SK-N-SH (cell line): ENCODE measurements at regions of chr1 and their contacts with region 1.

Region 1: GRCh38 chr1:52601991-52602855 is at the start of gene GPX7:
- DNase-seq: peak; percentile 89
- H3K4me3 ChIP-seq: peak within 1 kb of the TSS; percentile 9 to 42; a peak in 3 of 4 replicates
- H3K27ac ChIP-seq: peak within 1 kb of the TSS in 1 of 2 experiments; percentile 72; a peak in 2 of 4 replicates
- H3K4me1 ChIP-seq: peaks cover 0 to 23% of the 10 kb centered on the region in 2 experiments; a peak in 2 of 4 replicates
- H3K27me3 ChIP-seq: no peaks in the 10 kb centered on the region
- CTCF ChIP-seq: no peak
- EP300 ChIP-seq: no peak
- RAD21 ChIP-seq: 0 out of 2 replicates have a peak, but pooled peaks have one; percentile 0
- polyA plus RNA-seq, gene GPX7: 5.7 and 6.2 TPM in 2 replicates

Region 2: GRCh38 chr1:52552505-52553361 is 49.5 kb before region 1 on chr1 and contains the start of gene TUT4:
- CTCF ChIA-PET with region 1: interaction called, 3 read pairs
- POLR2A ChIA-PET with region 1: interaction called, 12 read pairs
- DNase-seq: peak; percentile 91
- H3K4me3 ChIP-seq: peak within 1 kb of the TSS; percentile 89 to 95
- H3K27ac ChIP-seq: peak within 1 kb of the TSS; percentile 84 to 95
- H3K4me1 ChIP-seq: peaks cover 0 to 11% of the 10 kb centered on the region in 2 experiments
- H3K27me3 ChIP-seq: no peaks in the 10 kb centered on the region
- CTCF ChIP-seq: peak; percentile 25
- EP300 ChIP-seq: no peak
- RAD21 ChIP-seq: no peak
- polyA plus RNA-seq, gene TUT4: 27.2 and 28.3 TPM in 2 replicates

Region 3: DNA sequence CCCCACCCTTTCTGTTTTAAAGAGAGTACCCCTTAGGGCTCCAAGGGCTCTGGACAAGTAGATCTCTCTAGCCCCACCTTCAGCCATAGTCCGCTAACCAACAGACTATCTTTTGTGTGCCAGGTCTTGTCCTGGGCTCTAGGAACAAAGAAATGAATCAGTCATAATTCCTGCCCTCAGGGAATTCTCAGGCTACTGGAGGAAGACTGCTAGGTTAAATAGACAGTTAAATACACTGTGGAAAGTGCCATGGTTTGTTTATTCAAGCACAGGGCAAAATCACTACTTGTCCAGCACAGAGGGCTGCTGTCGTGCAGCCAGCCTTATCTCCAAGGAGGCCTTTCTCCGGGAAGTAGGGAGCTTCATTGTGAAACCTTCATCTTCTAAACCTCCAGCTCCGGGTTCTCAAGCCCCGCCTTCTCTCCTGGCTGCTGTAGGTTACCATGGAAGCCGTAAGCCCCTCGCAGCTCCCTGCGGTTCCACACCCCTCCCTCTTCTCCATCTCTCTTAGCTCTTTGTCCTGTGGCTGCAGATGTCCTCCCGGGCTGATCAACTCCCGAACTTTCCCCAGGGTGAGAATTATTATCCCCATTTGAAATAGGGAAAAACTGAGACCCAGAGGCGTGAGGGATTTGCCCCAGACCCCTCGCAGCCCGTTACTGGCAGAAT is 60.6 kb after region 1 on chr1:
- CTCF ChIA-PET with region 1: no interaction called
- POLR2A ChIA-PET with region 1: no interaction called
- DNase-seq: peak; percentile 40
- H3K4me3 ChIP-seq: no peak overlapping the region
- H3K27ac ChIP-seq: no peak overlapping the region
- H3K4me1 ChIP-seq: peaks cover 0 to 4% of the 10 kb centered on the region in 2 experiments; a peak in 2 of 4 replicates
- H3K27me3 ChIP-seq: no peaks in the 10 kb centered on the region
- CTCF ChIP-seq: no peak
- EP300 ChIP-seq: no peak
- RAD21 ChIP-seq: no peak

Region 4: DNA sequence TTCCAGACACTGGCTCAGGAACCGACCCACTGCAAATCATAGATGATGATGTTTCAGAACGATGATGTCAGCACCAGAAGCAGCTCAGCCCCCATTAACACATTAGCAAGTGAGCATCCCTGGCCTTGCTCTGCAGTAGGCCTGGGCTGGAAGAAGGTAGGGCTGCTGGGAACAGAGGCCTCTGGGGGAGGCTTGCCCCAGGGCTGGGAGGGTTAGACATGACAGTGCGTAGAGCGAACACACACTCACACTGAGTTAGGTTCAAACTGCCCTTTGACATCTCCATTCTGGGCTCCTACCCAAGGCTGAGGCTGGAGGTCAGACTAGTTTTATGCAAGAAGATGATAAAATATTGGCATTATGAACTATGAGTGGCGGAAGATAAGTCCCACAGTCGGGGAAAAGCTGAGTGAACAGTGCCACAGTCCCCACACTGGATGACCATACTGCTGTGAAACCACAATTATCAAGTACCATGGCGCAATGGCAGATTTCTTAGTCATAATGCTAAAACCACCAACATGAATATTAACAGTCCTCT is 948.0 kb after region 1 on chr1:
- CTCF ChIA-PET with region 1: no interaction called
- POLR2A ChIA-PET with region 1: no interaction called
- DNase-seq: peak; percentile 18
- H3K4me3 ChIP-seq: no peak overlapping the region
- H3K27ac ChIP-seq: no peak overlapping the region; a peak in 1 of 4 replicates
- H3K4me1 ChIP-seq: peaks cover 0 to 36% of the 10 kb centered on the region in 2 experiments; a peak in 1 of 4 replicates
- H3K27me3 ChIP-seq: no peaks in the 10 kb centered on the region
- CTCF ChIP-seq: no peak
- EP300 ChIP-seq: no peak
- RAD21 ChIP-seq: no peak